A549 (cell line): ENCODE measurements at regions of chr2 and their contacts with region 1.

Region 1: DNA sequence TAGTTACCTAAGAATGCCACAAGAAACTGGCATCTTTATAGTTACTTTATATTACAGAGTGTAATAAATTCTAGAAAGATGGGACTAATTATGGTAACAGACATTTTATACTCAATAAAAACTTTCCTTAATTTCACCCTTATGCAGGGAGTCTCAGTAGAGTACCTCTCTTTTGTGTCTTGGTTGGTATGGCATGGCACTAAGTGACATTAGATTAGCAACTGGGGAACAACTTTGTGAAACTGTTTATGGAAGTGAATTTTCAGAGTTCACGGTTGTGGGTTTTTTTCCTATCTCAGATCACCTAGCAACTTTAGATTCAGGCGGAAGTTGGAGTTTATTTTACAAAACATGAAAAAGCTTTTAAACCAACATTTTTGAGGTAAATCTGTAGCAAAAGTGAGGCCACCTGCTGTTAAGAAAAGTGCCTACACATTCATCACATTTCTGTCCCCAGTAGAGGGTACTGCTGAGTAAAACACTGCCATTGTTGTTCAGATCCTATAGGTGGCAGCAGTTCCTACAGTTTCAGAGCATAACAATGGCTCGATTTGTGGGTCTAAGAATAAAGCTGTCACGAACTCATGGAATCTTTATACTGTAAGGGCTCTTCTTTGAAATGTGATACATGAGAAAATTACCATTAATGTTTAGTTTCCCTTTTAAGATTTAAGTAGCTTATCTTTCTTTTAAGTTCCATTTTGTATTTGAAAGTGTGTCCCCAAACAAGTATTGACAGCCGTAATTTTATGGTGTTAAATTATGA is 117.6 kb downstream of the CAMKMT start:
- DNase-seq: peak; percentile 74 to 91
- ATAC-seq: peak; percentile 99 to 100
- H3K4me3 ChIP-seq: no peak overlapping the region
- H3K27ac ChIP-seq: no peak overlapping the region
- H3K4me1 ChIP-seq: no peaks in the 10 kb centered on the region
- CTCF ChIP-seq: peak; percentile 100
- EP300 ChIP-seq: no peak
- POLR2A ChIP-seq: no peak
- RAD21 ChIP-seq: peak; percentile 98

Region 2: GRCh38 chr2:44044281-44044720 is 435.0 kb before region 1 on chr2:
- CTCF ChIA-PET with region 1: interaction called, 33 read pairs
- POLR2A ChIA-PET with region 1: no interaction called
- DNase-seq: peak; percentile 91
- ATAC-seq: peak; percentile 100
- H3K4me3 ChIP-seq: no peak overlapping the region
- H3K27ac ChIP-seq: peak overlapping the region; percentile 67 to 87
- H3K4me1 ChIP-seq: peaks cover 4% of the 10 kb centered on the region
- CTCF ChIP-seq: peak; percentile 98
- EP300 ChIP-seq: no peak
- POLR2A ChIP-seq: no peak
- RAD21 ChIP-seq: peak; percentile 98

Region 3: GRCh38 chr2:44205169-44205568 is 274.1 kb before region 1 on chr2:
- CTCF ChIA-PET with region 1: no interaction called
- POLR2A ChIA-PET with region 1: no interaction called
- DNase-seq: no peak
- ATAC-seq: no peak
- H3K4me3 ChIP-seq: no peak overlapping the region
- H3K27ac ChIP-seq: no peak overlapping the region
- H3K4me1 ChIP-seq: peaks cover 10% of the 10 kb centered on the region; the same call in 1 of the 3 replicates
- CTCF ChIP-seq: no peak
- EP300 ChIP-seq: no peak
- POLR2A ChIP-seq: no peak
- RAD21 ChIP-seq: no peak

Region 4: GRCh38 chr2:44254023-44254422 is 225.3 kb before region 1 on chr2:
- CTCF ChIA-PET with region 1: no interaction called
- POLR2A ChIA-PET with region 1: no interaction called
- DNase-seq: no peak
- ATAC-seq: no peak
- H3K4me3 ChIP-seq: no peak overlapping the region
- H3K27ac ChIP-seq: no peak overlapping the region
- H3K4me1 ChIP-seq: 0 out of 3 replicates have a peak, but pooled peaks cover 3% of the 10 kb centered on the region
- CTCF ChIP-seq: no peak
- EP300 ChIP-seq: no peak
- POLR2A ChIP-seq: no peak
- RAD21 ChIP-seq: no peak

Region 5: DNA sequence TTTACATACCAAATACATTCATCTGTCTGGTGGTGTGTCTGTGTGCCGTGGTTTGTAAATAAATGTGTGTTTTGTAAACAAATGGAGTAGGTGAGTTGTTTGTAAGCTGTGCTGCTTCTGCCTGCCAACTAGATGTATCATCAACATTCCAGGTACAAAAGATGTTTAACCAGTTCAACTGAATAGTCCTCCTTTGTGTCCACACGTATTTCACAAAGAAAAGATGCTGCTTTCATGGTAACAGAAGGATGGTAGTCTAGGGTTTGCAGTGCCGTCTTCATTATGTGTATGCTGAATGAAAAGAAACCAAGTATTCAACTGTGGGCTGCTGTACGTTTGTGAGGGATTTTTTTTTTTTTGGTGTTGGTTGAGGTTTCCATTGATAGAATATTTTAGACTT is 45.4 kb before region 1 on chr2:
- CTCF ChIA-PET with region 1: interaction called, 11 read pairs
- POLR2A ChIA-PET with region 1: no interaction called
- DNase-seq: peak in 1 of 2 experiments; percentile 62
- ATAC-seq: peak; percentile 19 to 81; a peak in 3 of 6 replicates
- H3K4me3 ChIP-seq: no peak overlapping the region
- H3K27ac ChIP-seq: no peak overlapping the region
- H3K4me1 ChIP-seq: peaks cover 15% of the 10 kb centered on the region
- CTCF ChIP-seq: no peak
- EP300 ChIP-seq: no peak
- POLR2A ChIP-seq: no peak
- RAD21 ChIP-seq: no peak

Region 6: DNA sequence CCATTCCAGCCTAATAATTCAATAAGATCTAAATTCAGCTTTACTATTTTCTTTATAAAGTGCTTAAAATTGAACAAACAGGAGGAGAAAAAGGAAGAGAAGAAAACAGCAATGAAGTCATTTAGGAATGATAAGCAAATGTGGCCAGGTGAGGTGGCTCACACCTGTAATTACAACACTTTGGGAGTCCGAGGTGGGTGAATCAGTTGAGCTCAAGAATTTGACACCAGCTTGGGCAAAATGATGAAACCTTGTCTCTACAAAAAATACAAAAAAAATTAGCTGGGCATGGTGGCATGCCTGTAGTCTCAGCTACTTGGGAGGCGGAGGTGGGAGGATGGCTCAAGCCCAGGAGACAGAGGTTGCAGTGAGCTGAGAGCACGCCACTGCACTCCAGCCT is 11.4 kb after region 1 on chr2:
- CTCF ChIA-PET with region 1: interaction called, 57 read pairs
- POLR2A ChIA-PET with region 1: no interaction called
- DNase-seq: no peak
- ATAC-seq: no peak
- H3K4me3 ChIP-seq: no peak overlapping the region
- H3K27ac ChIP-seq: no peak overlapping the region
- H3K4me1 ChIP-seq: no peaks in the 10 kb centered on the region
- CTCF ChIP-seq: no peak
- EP300 ChIP-seq: no peak
- POLR2A ChIP-seq: no peak
- RAD21 ChIP-seq: no peak

Region 7: DNA sequence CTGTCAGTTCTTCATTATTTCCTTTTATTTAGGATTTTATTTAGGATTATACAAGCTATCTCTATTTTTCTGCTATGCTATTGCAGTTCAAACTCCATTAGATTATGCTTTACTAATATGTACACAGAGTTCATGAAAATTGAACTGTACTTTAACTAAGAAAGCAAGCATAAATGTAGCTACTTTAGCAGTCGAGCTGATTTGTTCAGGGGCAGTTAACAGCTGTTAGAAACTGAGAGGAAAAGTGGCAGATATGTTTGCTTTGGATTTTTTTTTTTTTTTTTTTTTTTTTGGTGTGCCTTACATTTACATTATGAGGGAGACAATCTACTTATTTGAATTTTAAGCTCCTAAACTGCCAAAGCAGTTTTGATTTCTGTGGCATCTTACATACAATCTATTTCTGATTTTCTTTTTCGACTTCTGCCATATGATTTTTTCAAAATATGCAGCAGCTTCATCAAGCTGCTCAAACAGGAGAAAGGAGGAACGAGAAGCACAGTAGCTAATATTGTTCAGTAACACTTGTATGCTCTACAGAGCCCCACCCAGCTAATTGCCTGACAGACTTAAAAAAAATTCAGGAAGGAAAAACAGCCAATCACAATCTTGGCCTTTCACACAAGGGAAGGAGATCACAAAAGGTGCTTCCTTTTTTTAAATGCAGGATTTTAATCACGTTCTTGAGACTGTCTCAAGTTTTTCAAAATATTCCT is 228.8 kb after region 1 on chr2:
- CTCF ChIA-PET with region 1: interaction called, 17 read pairs
- POLR2A ChIA-PET with region 1: no interaction called
- DNase-seq: no peak
- ATAC-seq: no peak
- H3K4me3 ChIP-seq: no peak overlapping the region
- H3K27ac ChIP-seq: no peak overlapping the region
- H3K4me1 ChIP-seq: no peaks in the 10 kb centered on the region
- CTCF ChIP-seq: no peak
- EP300 ChIP-seq: no peak
- POLR2A ChIP-seq: no peak
- RAD21 ChIP-seq: no peak

Region 8: GRCh38 chr2:44974064-44974715 is 494.9 kb after region 1 on chr2:
- CTCF ChIA-PET with region 1: interaction called, 15 read pairs
- POLR2A ChIA-PET with region 1: no interaction called
- DNase-seq: peak; percentile 77 to 79
- ATAC-seq: peak; percentile 73 to 90; a peak in 5 of 6 replicates
- H3K4me3 ChIP-seq: no peak overlapping the region
- H3K27ac ChIP-seq: no peak overlapping the region; a peak in 1 of 6 replicates
- H3K4me1 ChIP-seq: peaks cover 8% of the 10 kb centered on the region; the same call in 1 of the 3 replicates
- CTCF ChIP-seq: peak; percentile 64
- EP300 ChIP-seq: no peak
- POLR2A ChIP-seq: no peak
- RAD21 ChIP-seq: peak; percentile 70 to 86